Activated B cell treated with CpG ODN at 0.5 μM for 24 hours (primary cell): ENCODE measurements at regions of chr11 and their contacts with region 1.

Region 1: DNA sequence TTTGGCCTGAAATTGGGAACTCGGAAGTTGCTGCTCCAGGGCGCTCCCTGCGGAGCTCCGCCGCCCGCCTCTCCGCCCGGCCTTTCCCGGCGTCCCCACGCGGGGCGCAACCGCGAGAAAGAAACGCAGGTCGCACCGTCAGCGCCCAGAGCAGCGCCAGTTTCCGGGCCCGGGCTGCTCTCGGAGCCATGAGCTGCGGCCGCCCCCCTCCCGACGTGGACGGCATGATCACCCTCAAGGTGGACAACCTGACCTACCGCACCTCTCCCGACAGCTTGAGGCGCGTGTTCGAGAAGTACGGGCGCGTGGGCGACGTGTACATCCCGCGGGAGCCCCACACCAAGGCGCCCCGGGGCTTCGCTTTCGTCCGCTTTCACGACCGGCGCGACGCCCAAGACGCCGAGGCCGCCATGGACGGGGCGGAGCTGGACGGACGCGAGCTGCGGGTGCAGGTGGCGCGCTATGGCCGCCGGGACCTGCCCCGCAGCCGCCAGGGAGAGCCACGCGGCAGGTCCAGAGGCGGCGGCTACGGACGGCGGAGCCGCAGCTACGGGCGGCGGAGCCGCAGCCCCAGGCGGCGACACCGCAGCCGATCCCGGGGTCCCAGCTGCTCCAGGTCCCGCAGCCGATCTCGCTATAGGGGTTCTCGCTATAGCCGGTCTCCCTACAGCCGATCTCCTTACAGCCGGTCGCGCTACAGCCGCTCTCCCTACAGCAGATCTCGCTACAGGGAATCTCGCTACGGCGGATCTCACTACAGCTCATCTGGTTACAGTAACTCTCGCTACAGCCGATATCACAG is 521 bp downstream of the SRSF8 start:
- DNase-seq: peak; percentile 76
- ATAC-seq: peak; percentile 71
- H3K4me3 Mint-ChIP-seq: peak overlapping the region; percentile 93
- H3K27ac Mint-ChIP-seq: peak overlapping the region; percentile 99
- H3K4me1 Mint-ChIP-seq: peaks cover 29% of the 10 kb centered on the region
- H3K27me3 Mint-ChIP-seq: no peaks in the 10 kb centered on the region
- CTCF ChIP-seq: no peak

Region 2: DNA sequence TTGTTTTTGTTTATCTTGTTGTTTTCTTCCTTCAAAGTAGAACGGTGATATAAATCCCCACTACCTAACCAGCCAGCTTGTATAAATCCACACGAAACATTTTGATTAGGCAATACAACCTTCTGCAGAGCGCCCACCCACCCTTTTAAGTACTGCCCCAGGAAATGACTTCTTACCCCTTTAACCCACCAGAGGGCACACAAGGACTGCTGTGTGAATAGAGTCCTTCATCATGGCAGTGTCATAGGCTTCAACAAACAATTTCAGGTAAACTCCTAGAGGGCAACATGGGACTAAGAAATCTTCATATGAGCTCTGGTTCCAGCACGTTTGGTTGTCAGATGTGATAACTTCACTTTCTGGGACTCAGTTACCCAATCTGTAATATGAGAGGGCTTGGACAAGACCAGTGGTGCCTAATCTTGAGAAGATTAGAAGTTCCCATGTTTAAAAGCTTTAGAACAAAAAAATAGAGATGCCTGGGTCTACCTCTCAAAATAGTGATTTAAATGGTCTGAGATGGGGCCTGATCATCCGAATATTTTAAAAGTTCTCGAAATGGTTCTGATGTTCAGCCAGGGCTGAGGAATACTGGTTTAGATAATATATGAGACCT is 444.0 kb before region 1 on chr11:
- CTCF ChIA-PET with region 1: no interaction called
- POLR2A ChIA-PET with region 1: no interaction called
- intact Hi-C with region 1: loop called (anchors 5 kb)
- DNase-seq: no peak
- ATAC-seq: peak; percentile 58
- H3K4me3 Mint-ChIP-seq: no peak overlapping the region
- H3K27ac Mint-ChIP-seq: no peak overlapping the region
- H3K4me1 Mint-ChIP-seq: no peaks in the 10 kb centered on the region
- H3K27me3 Mint-ChIP-seq: peaks cover 14% of the 10 kb centered on the region
- CTCF ChIP-seq: no peak

Region 3: DNA sequence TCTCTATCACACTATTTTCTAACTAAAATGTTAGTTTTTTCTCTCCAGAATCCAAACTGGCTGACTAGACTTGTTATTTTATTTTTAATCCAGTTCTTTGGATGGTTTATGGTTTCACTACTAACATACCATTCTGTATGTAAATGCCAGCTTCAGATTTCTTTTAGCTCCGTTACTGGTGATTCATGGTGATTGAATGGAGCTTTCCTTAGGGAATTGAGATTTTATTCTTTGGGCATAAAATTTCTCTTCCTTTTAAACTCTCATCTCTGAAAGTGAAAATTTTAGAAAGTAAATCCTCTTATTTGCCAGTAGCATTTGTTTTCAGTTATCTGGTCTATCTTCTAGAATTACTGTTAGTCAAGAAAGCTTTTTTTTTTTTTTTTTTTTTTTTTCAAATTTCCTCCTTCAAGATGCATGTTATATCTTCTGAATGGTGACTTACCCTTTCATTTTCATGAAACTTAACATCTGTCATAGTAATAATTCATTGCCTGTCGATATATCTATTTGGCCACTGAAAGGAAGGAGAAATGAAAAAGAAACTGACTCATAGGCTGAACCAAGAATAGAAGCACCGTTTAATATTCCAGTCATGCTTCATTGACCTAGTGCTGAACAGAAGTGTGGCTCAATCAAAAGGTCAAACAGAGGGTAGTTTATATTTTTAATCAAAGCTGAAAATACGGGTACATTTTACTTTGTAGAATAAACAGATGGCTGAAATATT is 28.8 kb after region 1 on chr11:
- CTCF ChIA-PET with region 1: interaction called, 138 read pairs
- POLR2A ChIA-PET with region 1: interaction called, 89 read pairs
- intact Hi-C with region 1: loop called (anchors 1 kb)
- DNase-seq: no peak
- ATAC-seq: peak; percentile 89
- H3K4me3 Mint-ChIP-seq: peak overlapping the region; percentile 59
- H3K27ac Mint-ChIP-seq: peak overlapping the region; percentile 78
- H3K4me1 Mint-ChIP-seq: peaks cover 94% of the 10 kb centered on the region
- H3K27me3 Mint-ChIP-seq: no peaks in the 10 kb centered on the region
- CTCF ChIP-seq: no peak

Region 4: DNA sequence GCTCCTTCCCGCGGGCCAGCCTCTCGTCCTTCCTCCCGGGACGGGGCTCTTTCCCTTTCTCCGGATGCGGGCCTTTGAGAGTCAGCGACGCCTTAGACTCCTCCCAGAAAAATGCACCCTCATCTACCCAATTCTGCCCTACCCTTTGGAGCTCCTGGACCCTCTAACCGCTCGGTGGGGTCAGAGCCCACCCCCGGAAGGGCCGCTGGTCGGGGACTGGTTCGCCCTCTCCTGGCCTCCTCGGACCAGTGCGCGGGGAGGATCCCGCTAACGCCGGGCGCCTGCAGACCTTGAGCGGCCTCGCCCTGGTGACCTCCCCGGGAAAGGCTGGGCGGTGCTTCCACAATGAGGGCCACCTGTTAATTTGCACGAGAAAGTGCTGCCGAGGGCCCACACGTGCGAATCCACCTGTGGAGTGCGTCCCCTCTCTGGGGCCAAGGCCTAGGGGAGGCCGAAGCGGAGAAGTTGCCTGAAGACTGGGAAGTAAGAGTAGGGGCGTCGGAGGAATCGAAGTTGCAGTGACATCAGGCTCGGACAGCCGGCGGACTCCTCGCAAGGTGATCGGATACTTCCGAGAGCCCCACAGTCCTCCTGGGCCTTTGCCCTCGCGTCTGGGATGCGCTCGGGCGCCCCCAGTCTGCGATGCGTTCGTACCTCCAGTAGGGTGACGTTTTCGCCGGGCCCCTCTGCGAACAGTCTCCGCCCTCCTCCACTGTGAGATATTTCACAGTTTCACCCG is 83.9 kb after region 1 on chr11:
- CTCF ChIA-PET with region 1: interaction called, 91 read pairs
- POLR2A ChIA-PET with region 1: interaction called, 68 read pairs
- intact Hi-C with region 1: loop called (anchors 1 kb)
- DNase-seq: peak; percentile 78
- ATAC-seq: peak; percentile 90
- H3K4me3 Mint-ChIP-seq: peak overlapping the region; percentile 89
- H3K27ac Mint-ChIP-seq: peak overlapping the region; percentile 93
- H3K4me1 Mint-ChIP-seq: peaks cover 38% of the 10 kb centered on the region
- H3K27me3 Mint-ChIP-seq: no peaks in the 10 kb centered on the region
- CTCF ChIP-seq: no peak

Region 5: GRCh38 chr11:95715777-95716241 is 648.6 kb after region 1 on chr11:
- CTCF ChIA-PET with region 1: interaction called, 3 read pairs
- POLR2A ChIA-PET with region 1: interaction called, 17 read pairs
- intact Hi-C with region 1: no loop called
- DNase-seq: peak; percentile 39
- ATAC-seq: peak; percentile 78
- H3K4me3 Mint-ChIP-seq: peak overlapping the region; percentile 75
- H3K27ac Mint-ChIP-seq: peak overlapping the region; percentile 95
- H3K4me1 Mint-ChIP-seq: peaks cover 92% of the 10 kb centered on the region
- H3K27me3 Mint-ChIP-seq: no peaks in the 10 kb centered on the region
- CTCF ChIP-seq: no peak

Region 6: GRCh38 chr11:95923728-95924413 is 856.6 kb after region 1 on chr11 and contains the start of gene MTMR2:
- CTCF ChIA-PET with region 1: no interaction called
- POLR2A ChIA-PET with region 1: no interaction called
- intact Hi-C with region 1: loop called (anchors 10 kb)
- DNase-seq: peak; percentile 60
- ATAC-seq: peak; percentile 98
- H3K4me3 Mint-ChIP-seq: peak within 1 kb of the TSS; percentile 100
- H3K27ac Mint-ChIP-seq: peak within 1 kb of the TSS; percentile 98
- H3K4me1 Mint-ChIP-seq: peaks cover 29% of the 10 kb centered on the region
- H3K27me3 Mint-ChIP-seq: peaks cover 9% of the 10 kb centered on the region
- CTCF ChIP-seq: no peak
- total RNA-seq, gene MTMR2: 22.6 and 25.1 TPM in 2 replicates